Common myeloid progenitor, CD34-positive (primary cell): ENCODE measurements at regions of chr15 and their contacts with region 1.

Region 1: DNA sequence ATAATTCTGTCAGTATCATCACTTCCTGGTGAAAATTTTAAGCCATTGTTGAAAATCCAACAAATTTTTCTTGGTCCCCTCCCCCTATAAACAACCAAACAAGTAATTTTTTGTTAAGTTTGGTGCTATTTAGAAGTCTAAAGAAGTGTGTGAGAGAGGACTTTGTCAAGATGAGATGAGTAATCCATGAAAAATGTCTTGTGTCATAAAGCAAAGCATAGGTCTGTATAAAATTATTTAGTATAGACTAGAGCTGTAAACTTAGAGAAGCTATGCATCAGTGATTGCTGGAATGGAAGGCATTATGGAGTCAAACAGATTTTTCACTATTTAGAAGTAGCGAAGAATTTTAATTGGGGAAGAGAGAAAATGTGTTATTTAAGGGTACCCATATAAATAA is 31.4 kb downstream of the MAPK6 start:
- DNase-seq: no peak
- H3K4me3 ChIP-seq: no peak overlapping the region
- H3K27ac ChIP-seq: no peak overlapping the region
- H3K4me1 ChIP-seq: peaks cover 8 to 15% (median 11%) of the 10 kb centered on the region in 4 experiments
- H3K27me3 ChIP-seq: no peaks in the 10 kb centered on the region

Region 2: GRCh38 chr15:51849860-51850259 is 200.6 kb before region 1 on chr15:
- CTCF ChIA-PET with region 1: no interaction called
- POLR2A ChIA-PET with region 1: no interaction called
- DNase-seq: no peak
- H3K4me3 ChIP-seq: no peak overlapping the region
- H3K27ac ChIP-seq: no peak overlapping the region
- H3K4me1 ChIP-seq: peaks cover 0 to 22% (median 18%) of the 10 kb centered on the region in 4 experiments
- H3K27me3 ChIP-seq: no peaks in the 10 kb centered on the region

Region 3: GRCh38 chr15:52078876-52079700 is 28.7 kb after region 1 on chr15:
- CTCF ChIA-PET with region 1: interaction called, 10 read pairs
- POLR2A ChIA-PET with region 1: no interaction called
- DNase-seq: peak; percentile 74 to 78 (median 77)
- H3K4me3 ChIP-seq: no peak overlapping the region
- H3K27ac ChIP-seq: no peak overlapping the region
- H3K4me1 ChIP-seq: peaks cover 6 to 52% (median 40%) of the 10 kb centered on the region in 4 experiments
- H3K27me3 ChIP-seq: no peaks in the 10 kb centered on the region